Activated CD8-positive, alpha-beta memory T cell treated with anti-CD3 and anti-CD28 coated beads, Interleukin-2, amount 10 ng/mL, durations not matched to agents 7 days and 5 days (primary cell): ENCODE measurements at regions of chr10 and their contacts with region 1.

Region 1: GRCh38 chr10:88386821-88387773 is 196.0 kb downstream of the RNLS start:
- DNase-seq: no peak
- ATAC-seq: no peak
- H3K4me3 Mint-ChIP-seq: no peak overlapping the region
- H3K27ac Mint-ChIP-seq: no peak overlapping the region
- H3K4me1 Mint-ChIP-seq: peaks cover 26% of the 10 kb centered on the region
- H3K27me3 Mint-ChIP-seq: no peaks in the 10 kb centered on the region

Region 2: GRCh38 chr10:87850742-87851205 is 536.3 kb before region 1 on chr10:
- CTCF ChIA-PET with region 1: interaction called, 34 read pairs
- DNase-seq: peak; percentile 70
- ATAC-seq: peak; percentile 89
- H3K4me3 Mint-ChIP-seq: no peak overlapping the region
- H3K27ac Mint-ChIP-seq: no peak overlapping the region
- H3K4me1 Mint-ChIP-seq: peaks cover 18% of the 10 kb centered on the region
- H3K27me3 Mint-ChIP-seq: no peaks in the 10 kb centered on the region

Region 3: GRCh38 chr10:87861953-87862678 is 525.0 kb before region 1 on chr10:
- CTCF ChIA-PET with region 1: interaction called, 82 read pairs
- DNase-seq: peak; percentile 97
- ATAC-seq: peak; percentile 73
- H3K4me3 Mint-ChIP-seq: peak overlapping the region; percentile 92
- H3K27ac Mint-ChIP-seq: peak overlapping the region; percentile 93
- H3K4me1 Mint-ChIP-seq: peaks cover 24% of the 10 kb centered on the region
- H3K27me3 Mint-ChIP-seq: no peaks in the 10 kb centered on the region

Region 4: GRCh38 chr10:88091490-88092105 is 295.5 kb before region 1 on chr10:
- CTCF ChIA-PET with region 1: interaction called, 11 read pairs
- DNase-seq: peak; percentile 91
- ATAC-seq: peak; percentile 93
- H3K4me3 Mint-ChIP-seq: no peak overlapping the region
- H3K27ac Mint-ChIP-seq: peak overlapping the region; percentile 81
- H3K4me1 Mint-ChIP-seq: peaks cover 36% of the 10 kb centered on the region
- H3K27me3 Mint-ChIP-seq: peaks cover 34% of the 10 kb centered on the region

Region 5: GRCh38 chr10:88243836-88244730 is 143.0 kb before region 1 on chr10:
- CTCF ChIA-PET with region 1: no interaction called
- DNase-seq: no peak
- ATAC-seq: no peak
- H3K4me3 Mint-ChIP-seq: no peak overlapping the region
- H3K27ac Mint-ChIP-seq: no peak overlapping the region
- H3K4me1 Mint-ChIP-seq: peaks cover 13% of the 10 kb centered on the region
- H3K27me3 Mint-ChIP-seq: no peaks in the 10 kb centered on the region

Region 6: DNA sequence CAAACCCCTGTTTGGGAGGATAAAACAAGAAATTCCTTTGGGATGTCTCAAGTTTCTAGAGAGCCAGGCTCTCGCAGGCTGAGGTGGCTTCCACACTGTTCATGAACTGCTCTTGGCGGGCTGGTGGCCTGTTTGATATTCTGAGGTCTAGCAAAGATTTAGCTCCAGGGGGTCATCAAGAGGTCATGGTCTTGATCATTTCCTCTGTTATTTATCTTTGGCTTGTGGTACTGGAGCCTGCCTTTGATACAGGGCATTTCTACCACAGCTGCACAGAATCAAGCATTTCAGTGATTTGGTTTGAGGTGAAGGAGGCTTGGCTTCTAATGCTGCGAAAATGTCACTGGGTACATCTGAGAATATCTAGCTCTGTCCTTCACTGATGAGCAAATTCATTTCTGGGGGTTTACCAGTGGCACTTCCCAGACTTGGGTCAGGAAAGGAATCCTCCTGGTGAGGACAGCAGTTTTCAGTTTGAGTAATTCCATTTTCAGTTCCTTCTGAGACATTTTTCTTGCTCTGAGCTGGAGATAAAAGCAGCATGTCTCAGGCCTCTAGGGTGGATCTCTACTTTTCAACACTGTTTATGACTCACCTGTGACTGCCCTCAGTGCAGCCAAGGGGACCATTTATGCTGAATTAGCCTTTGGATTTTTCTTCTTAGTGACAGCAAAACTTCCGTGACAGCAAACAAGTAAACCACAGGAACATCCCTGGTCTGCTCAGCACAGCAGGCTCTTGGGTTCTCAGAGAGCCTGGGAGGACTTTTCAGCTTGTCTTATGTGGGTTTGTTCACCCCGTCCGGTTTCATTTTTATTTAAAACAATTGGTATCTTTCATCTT is 116.0 kb before region 1 on chr10:
- CTCF ChIA-PET with region 1: interaction called, 24 read pairs
- DNase-seq: peak; percentile 89
- ATAC-seq: peak; percentile 91
- H3K4me3 Mint-ChIP-seq: peak overlapping the region; percentile 33
- H3K27ac Mint-ChIP-seq: peak overlapping the region; percentile 89
- H3K4me1 Mint-ChIP-seq: peaks cover 54% of the 10 kb centered on the region
- H3K27me3 Mint-ChIP-seq: peaks cover 2% of the 10 kb centered on the region